ENCODE measurements at regions of chr2 and their contacts with region 1.

Region 1: DNA sequence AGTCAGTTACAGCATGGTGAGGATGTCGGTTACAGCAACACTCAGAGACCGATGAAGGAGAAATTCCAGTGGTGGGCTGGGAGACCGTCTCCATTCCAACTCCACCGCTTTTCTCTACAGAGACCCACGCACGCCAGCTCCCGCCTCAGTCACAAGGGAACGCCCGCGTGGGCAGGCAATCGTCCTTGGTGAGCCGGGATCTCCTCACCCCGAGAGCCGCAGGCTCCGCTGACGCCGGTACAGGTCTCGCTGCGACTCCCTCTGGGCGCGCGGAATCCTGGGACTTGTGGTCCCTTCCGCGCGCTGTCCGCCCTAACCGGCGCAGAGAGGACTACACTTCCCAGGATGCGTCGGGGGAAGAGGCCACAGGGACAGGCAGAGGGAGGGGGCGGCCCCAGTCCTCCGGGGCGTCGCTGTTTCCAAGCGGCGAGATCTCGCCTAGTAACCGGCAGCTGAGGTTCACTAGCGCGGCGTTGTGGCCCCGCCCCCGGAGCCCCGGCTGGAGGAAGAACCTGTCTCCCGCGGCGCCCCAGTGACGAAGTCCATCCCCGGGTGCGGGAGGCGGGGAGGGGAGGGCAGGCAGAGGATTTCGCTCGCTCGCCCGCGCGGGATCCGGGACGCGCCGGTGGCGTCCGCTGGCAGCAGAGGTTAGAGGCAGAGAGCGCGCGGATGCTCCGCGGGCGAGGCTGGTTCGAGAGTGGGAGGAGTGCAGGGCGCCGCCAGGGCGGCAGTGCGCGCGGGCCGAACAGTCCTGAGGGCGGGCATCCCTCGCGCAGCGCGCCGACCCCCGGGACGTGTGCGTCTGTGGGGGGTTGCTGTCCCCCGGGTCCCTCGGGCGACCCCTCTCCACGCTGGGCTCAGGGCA is at the start of gene EML6:
- DNase-seq: peak; percentile 99
- H3K4me3 ChIP-seq: peak within 1 kb of the TSS; percentile 41 to 68 (median 60)
- H3K27ac ChIP-seq: peak within 1 kb of the TSS; percentile 75 to 85 (median 78)
- H3K4me1 ChIP-seq: peaks cover 0 to 19% (median 14%) of the 10 kb centered on the region in 4 donors
- H3K27me3 ChIP-seq: peaks cover 27% of the 10 kb centered on the region
- CTCF ChIP-seq: peak in 3 of 5 experiments; percentile 25 to 37 (median 35)
- EP300 ChIP-seq: no peak
- POLR2A ChIP-seq: peak; percentile 70
- total RNA-seq, gene EML6: 1.5 to 8.2 (median 3.4) TPM

Region 2: DNA sequence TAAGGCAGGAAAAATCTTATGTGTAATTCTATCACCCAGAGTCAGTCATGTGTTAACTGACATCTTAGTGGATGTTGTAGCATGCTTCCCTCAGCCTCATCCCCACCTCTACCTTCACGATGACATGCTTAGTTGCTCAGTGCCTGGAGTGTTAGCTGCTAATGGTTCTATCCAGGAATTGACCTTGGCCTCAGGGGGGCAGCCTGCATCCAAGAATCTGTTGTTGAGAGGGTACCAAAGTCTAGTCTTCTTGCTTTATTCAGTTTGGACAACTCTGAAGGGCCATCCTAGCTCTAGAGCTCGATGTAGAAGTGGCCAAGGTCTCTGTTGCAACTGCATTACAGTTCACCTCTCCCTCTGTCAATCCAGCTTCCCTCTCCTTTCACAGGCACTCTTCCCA is 546.8 kb before region 1 on chr2:
- in situ Hi-C with region 1: loop called in 1 of 4 experiments (anchors 25 kb)
- intact Hi-C with region 1: no loop called
- DNase-seq: peak; percentile 9
- H3K4me3 ChIP-seq: no peak overlapping the region
- H3K27ac ChIP-seq: no peak overlapping the region
- H3K4me1 ChIP-seq: no peaks in the 10 kb centered on the region
- H3K27me3 ChIP-seq: no peaks in the 10 kb centered on the region
- CTCF ChIP-seq: peak in 2 of 5 experiments; percentile 11 to 13
- EP300 ChIP-seq: no peak
- POLR2A ChIP-seq: no peak

Region 3: GRCh38 chr2:54455563-54456361 is 267.6 kb before region 1 on chr2 and contains the start of gene SPTBN1:
- in situ Hi-C with region 1: no loop called
- intact Hi-C with region 1: no loop called
- DNase-seq: peak; percentile 77
- H3K4me3 ChIP-seq: peak within 1 kb of the TSS; percentile 71 to 84 (median 77)
- H3K27ac ChIP-seq: peak within 1 kb of the TSS; percentile 86 to 94 (median 92)
- H3K4me1 ChIP-seq: peaks cover 0 to 22% (median 14%) of the 10 kb centered on the region in 4 donors
- H3K27me3 ChIP-seq: peaks cover 78% of the 10 kb centered on the region
- CTCF ChIP-seq: no peak
- EP300 ChIP-seq: no peak
- POLR2A ChIP-seq: peak; percentile 41
- total RNA-seq, gene SPTBN1: 269 to 301 (median 285) TPM

Region 4: GRCh38 chr2:54558188-54559005 is 165.0 kb before region 1 on chr2:
- in situ Hi-C with region 1: no loop called
- intact Hi-C with region 1: no loop called
- DNase-seq: peak; percentile 84
- H3K4me3 ChIP-seq: peak overlapping the region; percentile 41 to 63 (median 56)
- H3K27ac ChIP-seq: peak overlapping the region; percentile 91 to 98 (median 92)
- H3K4me1 ChIP-seq: peaks cover 30 to 70% (median 44%) of the 10 kb centered on the region in 4 donors
- H3K27me3 ChIP-seq: no peaks in the 10 kb centered on the region
- CTCF ChIP-seq: no peak
- EP300 ChIP-seq: no peak
- POLR2A ChIP-seq: peak; percentile 86

Region 5: DNA sequence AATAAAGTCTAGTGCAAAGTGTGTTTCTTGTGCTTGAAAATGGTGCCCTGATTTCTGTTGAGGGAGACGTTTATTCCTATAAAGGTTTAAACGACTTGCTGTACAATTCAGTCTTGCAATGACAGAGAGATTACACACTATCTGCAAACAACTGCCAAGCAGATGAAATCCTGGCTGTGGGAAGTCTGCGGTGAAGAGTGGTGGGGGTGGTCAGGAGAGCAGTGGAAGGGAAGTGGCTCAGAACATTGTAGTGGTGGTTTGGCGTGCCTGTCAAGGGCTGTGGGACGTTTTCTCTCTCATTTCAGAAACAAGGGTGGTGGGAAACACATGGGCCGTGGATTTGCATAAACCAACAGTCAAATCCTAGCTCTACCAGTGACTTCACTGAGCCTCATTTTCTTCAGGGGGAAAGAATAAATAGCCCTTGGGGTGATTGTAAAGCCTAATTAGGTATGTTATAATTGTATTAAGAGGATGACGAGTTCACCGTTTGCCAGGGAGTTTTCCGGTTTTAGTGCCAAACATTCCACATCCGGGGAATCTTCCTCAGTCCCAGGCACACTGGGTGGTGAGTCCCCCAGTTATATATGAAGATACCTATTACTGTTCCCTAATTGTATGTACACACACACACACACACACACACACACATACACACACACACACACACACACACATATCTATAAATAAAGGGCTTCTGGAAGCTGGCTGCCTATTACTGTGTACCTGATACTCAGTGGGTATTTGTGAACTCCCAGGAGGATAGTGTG is 152.3 kb before region 1 on chr2:
- in situ Hi-C with region 1: no loop called
- intact Hi-C with region 1: no loop called
- DNase-seq: peak; percentile 78
- H3K4me3 ChIP-seq: no peak overlapping the region
- H3K27ac ChIP-seq: peak overlapping the region; percentile 87 to 93 (median 90)
- H3K4me1 ChIP-seq: peaks cover 55 to 97% (median 78%) of the 10 kb centered on the region in 4 donors
- H3K27me3 ChIP-seq: no peaks in the 10 kb centered on the region
- CTCF ChIP-seq: no peak
- EP300 ChIP-seq: no peak
- POLR2A ChIP-seq: peak; percentile 16

Region 6: DNA sequence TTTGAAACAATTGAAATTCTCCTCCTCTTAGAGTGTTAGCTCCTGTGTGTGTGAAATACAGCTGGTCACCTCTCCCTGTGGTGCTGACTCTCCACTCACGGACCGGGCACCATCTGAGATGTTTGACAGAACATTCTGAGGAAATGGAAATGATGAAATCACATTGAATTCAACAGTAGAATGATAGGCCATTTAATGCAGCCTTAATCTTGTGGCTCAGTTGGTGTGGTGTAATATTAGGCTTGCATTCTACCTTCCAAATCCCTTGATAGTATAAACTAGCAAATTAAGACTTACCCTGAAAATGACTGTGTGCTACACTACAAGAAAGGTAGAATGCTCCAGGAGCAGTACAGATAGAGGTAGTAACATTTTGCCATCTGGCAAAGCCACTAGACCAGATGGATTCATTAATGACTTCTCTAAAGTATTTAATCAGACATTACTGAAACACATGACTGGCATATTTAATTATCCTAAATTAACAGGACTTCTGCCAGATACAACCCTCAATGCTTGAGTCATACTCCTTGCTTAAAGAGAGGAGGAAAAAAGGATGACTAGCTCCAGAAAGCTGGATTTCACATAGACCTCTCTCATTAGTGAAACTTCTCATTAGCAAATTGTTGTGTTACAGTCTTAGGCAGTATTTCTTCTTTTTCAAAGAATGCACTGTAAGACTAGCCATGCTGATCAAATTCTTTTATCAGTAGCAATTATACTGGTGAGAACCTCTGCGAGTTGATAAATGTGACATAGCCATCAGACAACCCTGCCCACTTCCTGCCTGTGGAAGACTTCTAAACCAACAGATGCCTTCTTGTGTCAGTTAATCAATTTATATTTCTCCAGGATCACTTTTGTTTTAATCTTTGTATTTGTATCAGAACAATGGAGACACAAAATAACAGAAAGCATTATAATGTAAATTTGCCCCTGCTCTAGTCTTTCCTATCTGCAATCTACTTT is 80.7 kb after region 1 on chr2:
- in situ Hi-C with region 1: no loop called
- intact Hi-C with region 1: no loop called
- DNase-seq: no peak
- H3K4me3 ChIP-seq: no peak overlapping the region
- H3K27ac ChIP-seq: no peak overlapping the region
- H3K4me1 ChIP-seq: no peaks in the 10 kb centered on the region
- H3K27me3 ChIP-seq: no peaks in the 10 kb centered on the region
- CTCF ChIP-seq: no peak
- EP300 ChIP-seq: no peak
- POLR2A ChIP-seq: no peak

Measured in transverse colon (tissue), 4 donors.